ENCODE measurements at regions of chr12 and their contacts with region 1.

Region 1: GRCh38 chr12:4763549-4763948 is 43.3 kb downstream of the GALNT8 start:
- DNase-seq: no peak
- ATAC-seq: no peak
- H3K4me3 ChIP-seq: no peak overlapping the region
- H3K27ac ChIP-seq: no peak overlapping the region
- H3K4me1 ChIP-seq: no peaks in the 10 kb centered on the region
- H3K27me3 ChIP-seq: no peaks in the 10 kb centered on the region
- CTCF ChIP-seq: no peak
- POLR2A ChIP-seq: no peak

Region 2: DNA sequence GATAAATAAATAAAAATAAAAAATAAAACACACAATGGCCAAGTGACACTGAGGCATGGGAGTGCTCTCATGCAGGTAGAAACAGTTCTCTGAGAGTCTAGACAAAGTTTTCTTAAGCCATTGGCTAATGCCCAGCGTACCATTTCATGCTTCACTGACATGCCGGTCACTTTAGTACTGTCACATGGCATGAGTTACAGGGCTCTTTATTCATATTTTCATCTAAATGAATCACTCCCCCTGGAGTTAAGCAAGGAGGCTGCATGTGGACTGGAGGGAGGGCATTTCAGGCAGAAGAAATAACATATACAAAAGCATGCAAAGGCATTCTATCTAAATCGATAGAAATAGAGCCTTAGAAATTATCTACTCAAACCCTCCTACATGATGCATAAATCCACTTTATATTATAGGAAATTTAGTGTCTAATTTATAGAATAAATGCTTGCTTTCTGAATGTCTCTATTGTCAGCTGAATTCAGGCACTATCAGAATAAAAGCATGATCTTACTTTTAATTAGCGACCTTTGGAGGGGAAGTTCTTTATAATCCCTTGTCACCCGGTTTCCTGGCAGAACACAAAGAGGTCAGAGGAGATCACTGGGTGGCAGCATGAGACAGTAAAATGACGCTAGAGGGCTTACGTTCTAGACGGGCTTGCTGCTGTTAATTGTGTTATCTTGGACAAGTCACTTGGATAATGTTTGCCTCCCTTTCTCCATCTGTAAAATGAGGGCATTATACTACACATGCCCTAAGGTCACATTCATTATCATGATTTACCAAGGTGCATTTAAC is 184.0 kb before region 1 on chr12:
- intact Hi-C with region 1: loop called in 1 of 2 experiments (anchors 10 kb)
- DNase-seq: no peak
- ATAC-seq: peak; percentile 74 to 91 (median 87)
- H3K4me3 ChIP-seq: no peak overlapping the region
- H3K27ac ChIP-seq: no peak overlapping the region
- H3K4me1 ChIP-seq: no peaks in the 10 kb centered on the region
- H3K27me3 ChIP-seq: no peaks in the 10 kb centered on the region
- CTCF ChIP-seq: peak; percentile 11 to 34 (median 20)
- POLR2A ChIP-seq: no peak

Region 3: DNA sequence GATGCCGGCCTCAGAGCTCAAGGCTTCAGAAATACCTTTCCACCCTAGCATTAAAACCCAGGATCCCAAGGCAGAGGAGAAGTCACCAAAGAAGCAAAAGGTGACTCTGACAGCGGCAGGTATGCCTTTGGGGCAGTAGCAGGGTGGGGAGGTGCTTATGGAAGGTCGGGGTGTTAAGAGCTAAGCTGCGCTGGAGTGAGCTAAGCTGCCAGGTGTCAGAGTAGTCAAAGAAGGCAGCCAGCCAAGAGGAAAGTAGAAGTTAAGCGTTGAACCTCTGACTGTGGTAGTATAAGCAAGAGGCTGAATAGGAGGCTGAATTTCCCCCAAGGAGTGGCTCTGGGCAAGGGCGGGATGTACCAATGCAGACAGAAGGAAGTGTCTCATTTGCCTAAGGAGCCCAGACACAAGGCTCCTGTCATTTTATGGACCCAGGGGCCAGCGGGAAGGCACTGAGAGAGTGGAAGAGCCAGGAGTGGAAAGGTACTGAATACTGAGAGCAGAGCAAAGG is 172.3 kb before region 1 on chr12:
- intact Hi-C with region 1: loop called (anchors 10 kb)
- DNase-seq: no peak
- ATAC-seq: no peak
- H3K4me3 ChIP-seq: no peak overlapping the region
- H3K27ac ChIP-seq: no peak overlapping the region
- H3K4me1 ChIP-seq: no peaks in the 10 kb centered on the region
- H3K27me3 ChIP-seq: no peaks in the 10 kb centered on the region
- CTCF ChIP-seq: no peak
- POLR2A ChIP-seq: no peak

Measured in right lobe of liver (tissue), 6 donors.